Aorta (tissue), 5 donors: ENCODE measurements at regions of chr12 and their contacts with region 1.

Region 1: GRCh38 chr12:26113853-26114719 is 10.8 kb downstream of the BHLHE41 start:
- DNase-seq: peak; percentile 96 to 97
- ATAC-seq: peak; percentile 95
- H3K4me3 ChIP-seq: peak overlapping the region; percentile 36 to 60
- H3K27ac ChIP-seq: peak overlapping the region; percentile 86 to 98
- H3K4me1 ChIP-seq: no peaks in the 10 kb centered on the region
- H3K27me3 ChIP-seq: no peaks in the 10 kb centered on the region

Region 2: GRCh38 chr12:26156201-26156871 is 42.2 kb after region 1 on chr12:
- intact Hi-C with region 1: no loop called
- DNase-seq: no peak
- ATAC-seq: no peak
- H3K4me3 ChIP-seq: no peak overlapping the region
- H3K27ac ChIP-seq: no peak overlapping the region
- H3K4me1 ChIP-seq: peaks cover 5 to 7% of the 10 kb centered on the region in 2 donors
- H3K27me3 ChIP-seq: no peaks in the 10 kb centered on the region

Region 3: DNA sequence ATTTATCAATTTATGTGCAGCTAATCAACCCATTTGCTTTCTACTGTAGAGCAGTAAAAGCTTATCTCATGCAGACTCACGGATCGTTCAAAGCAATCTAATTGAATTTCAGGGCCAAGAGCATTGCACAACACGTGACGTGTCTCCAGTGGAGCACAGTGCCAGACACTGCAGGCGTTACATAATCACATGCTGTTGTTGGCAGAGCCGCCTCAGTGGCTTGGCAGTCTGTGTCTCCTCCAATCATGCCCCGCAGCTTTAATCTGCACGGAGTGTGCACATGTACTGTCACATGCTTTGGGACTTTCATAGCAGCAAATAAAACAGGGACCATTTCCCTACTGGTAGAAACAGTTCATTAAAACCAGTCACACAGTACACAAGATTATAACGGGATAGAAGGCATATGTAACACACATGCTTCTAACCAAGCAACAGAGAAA is 409.6 kb after region 1 on chr12:
- intact Hi-C with region 1: loop called in 1 of 2 experiments (anchors 5 kb)
- DNase-seq: peak; percentile 90 to 93
- ATAC-seq: peak; percentile 99
- H3K4me3 ChIP-seq: no peak overlapping the region
- H3K27ac ChIP-seq: no peak overlapping the region
- H3K4me1 ChIP-seq: no peaks in the 10 kb centered on the region
- H3K27me3 ChIP-seq: no peaks in the 10 kb centered on the region